ENCODE measurements at regions of chr5 and their contacts with region 1.

Region 1: DNA sequence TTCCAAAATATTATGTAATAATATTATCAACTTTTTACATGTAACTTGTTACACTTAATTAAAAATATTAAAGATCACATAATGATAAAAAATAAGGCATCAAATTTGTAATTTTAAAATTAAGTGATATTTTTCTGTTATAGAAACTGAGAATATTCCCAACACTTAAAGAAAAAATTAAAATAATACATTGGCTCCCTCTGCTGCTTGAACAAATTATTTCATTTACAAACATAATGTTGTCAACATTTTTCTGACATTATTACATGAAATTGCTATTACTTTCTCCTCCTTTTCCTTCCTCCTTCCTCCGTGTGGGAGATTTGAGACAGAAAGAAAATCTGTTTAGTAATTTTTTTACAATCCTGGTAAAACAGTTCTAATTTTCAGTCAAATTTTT is 42.3 kb downstream of the RNF180 start:
- DNase-seq: peak; percentile 11
- H3K4me3 ChIP-seq: no peak overlapping the region
- H3K27ac ChIP-seq: no peak overlapping the region
- H3K4me1 ChIP-seq: peaks cover 11% of the 10 kb centered on the region
- H3K27me3 ChIP-seq: no peaks in the 10 kb centered on the region
- CTCF ChIP-seq: peak in 1 of 2 donors; percentile 24

Region 2: DNA sequence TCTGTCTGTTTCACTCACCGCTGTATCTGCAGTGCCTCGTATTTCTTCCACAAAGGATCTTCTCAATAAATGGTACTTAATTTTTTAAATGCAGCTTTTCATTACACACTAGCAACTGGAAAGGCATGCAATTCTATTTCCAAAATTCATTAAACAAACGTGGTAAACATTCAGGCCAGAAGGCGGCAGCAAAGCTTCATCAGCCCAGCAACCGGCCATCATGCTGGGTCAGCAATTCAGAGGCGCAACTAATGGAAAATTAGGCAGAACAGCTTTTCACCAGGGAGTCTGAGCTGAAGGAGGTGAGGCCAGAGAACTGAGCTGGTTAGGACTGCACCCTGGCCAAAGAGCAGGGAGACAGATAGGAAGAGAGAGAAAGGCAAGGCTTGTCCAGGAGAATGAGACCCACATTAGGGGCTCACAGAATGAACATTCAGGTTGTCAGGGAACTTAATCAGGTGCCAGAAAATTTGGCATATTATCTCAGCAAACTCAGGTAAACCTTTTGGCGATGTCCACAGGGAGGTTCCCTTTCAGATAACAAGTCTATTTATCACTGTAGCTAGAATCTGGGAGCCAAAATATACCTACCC is 60.0 kb before region 1 on chr5:
- CTCF ChIA-PET with region 1: no interaction called
- dilution Hi-C with region 1: no loop called
- in situ Hi-C with region 1: loop called in 1 of 2 experiments (anchors 10 kb)
- intact Hi-C with region 1: loop called (anchors 1 kb)
- DNase-seq: peak; percentile 28
- H3K4me3 ChIP-seq: no peak overlapping the region
- H3K27ac ChIP-seq: no peak overlapping the region
- H3K4me1 ChIP-seq: peaks cover 10% of the 10 kb centered on the region
- H3K27me3 ChIP-seq: no peaks in the 10 kb centered on the region
- CTCF ChIP-seq: peak; percentile 77 to 84

Region 3: DNA sequence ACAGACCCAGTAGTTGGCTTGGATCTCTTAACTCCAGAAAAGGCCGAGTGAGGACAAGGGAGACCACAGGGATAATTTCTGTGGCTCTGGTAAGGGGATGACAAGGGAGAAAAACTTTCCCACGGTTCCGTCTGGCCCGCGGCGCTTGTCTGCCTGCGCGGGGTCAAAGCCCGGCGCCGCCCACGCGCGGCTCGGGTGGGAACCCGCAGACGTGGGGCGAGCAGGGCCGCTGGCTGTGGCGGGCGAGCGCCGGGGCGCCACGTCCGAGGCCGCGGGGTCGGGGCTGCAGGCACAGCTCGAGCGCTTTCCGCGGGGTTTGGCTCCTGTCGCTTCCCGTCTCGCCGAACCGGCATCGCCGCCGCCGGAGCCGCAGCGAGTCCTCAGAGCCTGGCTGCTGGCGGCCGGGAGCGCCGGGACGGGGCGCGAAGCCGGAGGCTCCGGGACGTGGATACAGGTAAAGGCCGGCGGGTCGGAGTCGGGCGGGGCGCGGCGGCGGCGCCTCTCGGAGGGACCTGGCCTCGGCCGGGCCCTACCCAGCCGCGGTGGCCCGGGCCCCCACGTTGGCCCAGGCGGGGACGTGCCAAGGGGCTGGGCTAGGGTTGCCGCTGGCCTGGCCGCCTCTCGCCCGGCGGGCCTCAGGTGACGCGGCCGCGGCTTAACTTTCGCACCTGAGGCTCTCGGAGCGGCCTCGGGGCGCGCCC is 42.3 kb before region 1 on chr5 and contains the start of gene RNF180:
- CTCF ChIA-PET with region 1: interaction called, 8 read pairs
- dilution Hi-C with region 1: no loop called
- in situ Hi-C with region 1: no loop called
- intact Hi-C with region 1: loop called (anchors 5 kb)
- DNase-seq: peak; percentile 42
- H3K4me3 ChIP-seq: peak within 1 kb of the TSS; percentile 41 to 53 (median 47)
- H3K27ac ChIP-seq: no peak within 1 kb of the TSS
- H3K4me1 ChIP-seq: peaks cover 14% of the 10 kb centered on the region
- H3K27me3 ChIP-seq: peaks cover 22% of the 10 kb centered on the region
- CTCF ChIP-seq: no peak
- total RNA-seq, gene RNF180: 2.9 to 9.3 TPM

Measured in mammary epithelial cell (primary cell).